ENCODE measurements at regions of chr11 and their contacts with region 1.

Region 1: GRCh38 chr11:118907051-118908042 is 18.4 kb downstream of the BCL9L start:
- DNase-seq: peak; percentile 90
- H3K4me3 ChIP-seq: peak overlapping the region; percentile 18 to 23; a peak in 2 of 4 replicates
- H3K27ac ChIP-seq: peak overlapping the region; percentile 98 to 100
- H3K4me1 ChIP-seq: peaks cover 45 to 49% of the 10 kb centered on the region in 2 experiments
- H3K27me3 ChIP-seq: no peaks in the 10 kb centered on the region
- CTCF ChIP-seq: peak; percentile 93
- EP300 ChIP-seq: peak in 1 of 2 experiments; percentile 46; a peak in 2 of 4 replicates
- RAD21 ChIP-seq: peak; percentile 98

Region 2: DNA sequence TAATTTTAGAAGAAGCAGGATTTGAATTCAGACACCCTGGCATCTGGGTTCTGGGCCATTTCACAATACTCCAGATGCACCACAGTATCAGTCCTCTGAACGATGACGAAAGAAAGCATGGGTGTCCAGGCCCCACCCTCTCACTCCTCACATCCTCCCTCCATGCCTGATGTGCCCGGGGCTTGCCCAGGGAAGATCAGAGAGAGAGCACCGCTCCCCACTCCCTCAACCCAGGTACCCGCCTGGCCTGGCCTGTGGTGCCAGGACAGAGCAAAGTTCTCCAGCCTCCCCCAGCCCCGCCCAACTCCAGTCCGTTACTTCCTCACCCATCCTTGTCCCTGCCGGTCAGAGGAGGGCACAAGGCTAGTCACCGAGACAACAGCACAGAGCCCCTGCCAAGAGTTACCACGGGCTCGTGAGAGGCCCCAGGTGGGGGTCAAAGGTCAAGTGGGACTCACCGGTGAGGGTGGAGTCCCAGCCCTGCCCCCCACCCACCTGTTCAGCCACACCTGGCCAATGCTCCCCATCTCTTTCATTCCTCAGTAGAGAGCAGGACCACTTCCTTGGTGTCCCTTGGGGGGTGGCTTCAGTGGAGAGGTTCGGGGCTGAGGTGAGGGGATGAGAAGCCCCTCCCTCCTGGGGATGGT is 10.3 kb after region 1 on chr11:
- CTCF ChIA-PET with region 1: interaction called, 10 read pairs
- POLR2A ChIA-PET with region 1: interaction called, 37 read pairs
- DNase-seq: no peak
- H3K4me3 ChIP-seq: no peak overlapping the region
- H3K27ac ChIP-seq: peak overlapping the region; percentile 30 to 100; a peak in 3 of 4 replicates
- H3K4me1 ChIP-seq: peaks cover 88 to 93% of the 10 kb centered on the region in 2 experiments; a peak in 3 of 4 replicates
- H3K27me3 ChIP-seq: no peaks in the 10 kb centered on the region
- CTCF ChIP-seq: no peak
- EP300 ChIP-seq: no peak
- RAD21 ChIP-seq: no peak

Measured in SK-N-SH (cell line).